CD14-positive monocyte (primary cell): ENCODE measurements at regions of chr17 and their contacts with region 1.

Region 1: DNA sequence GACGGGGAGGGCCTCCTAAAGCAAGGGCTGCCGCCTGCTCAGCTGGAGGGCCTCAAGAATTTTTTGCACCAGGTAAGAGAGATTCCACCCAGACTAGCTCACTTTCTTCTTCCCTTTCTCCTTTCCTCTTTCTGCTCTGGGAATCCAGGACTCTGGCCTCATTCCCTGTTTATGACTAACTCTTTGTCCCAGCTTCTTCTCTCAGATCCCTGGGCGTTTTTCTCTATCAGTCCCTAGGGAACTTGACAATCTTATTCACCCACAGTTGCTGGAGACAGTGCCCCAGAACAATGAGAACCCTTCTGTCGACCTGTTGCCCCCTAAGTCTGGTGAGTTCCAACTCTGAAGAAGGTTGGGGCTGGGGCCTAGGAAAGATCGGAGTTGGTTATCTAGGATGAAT is 15.6 kb downstream of the CNTROB start:
- DNase-seq: no peak
- H3K4me3 ChIP-seq: no peak overlapping the region
- H3K4me3 Mint-ChIP-seq: no peak overlapping the region
- H3K27ac ChIP-seq: peak overlapping the region in 1 of 2 donors; percentile 6
- H3K27ac Mint-ChIP-seq: peak overlapping the region in 2 of 7 donors; percentile 33 to 44
- H3K4me1 ChIP-seq: peaks cover 0 to 4% of the 10 kb centered on the region in 2 donors
- H3K4me1 Mint-ChIP-seq: peaks cover 15% of the 10 kb centered on the region
- H3K27me3 ChIP-seq: no peaks in the 10 kb centered on the region
- H3K27me3 Mint-ChIP-seq: peaks cover 0 to 1% (median 0%) of the 10 kb centered on the region in 3 donors
- CTCF ChIP-seq: no peak

Region 2: GRCh38 chr17:7982666-7983065 is 35.0 kb after region 1 on chr17:
- intact Hi-C with region 1: loop called in 1 of 2 experiments (anchors 5 kb)
- DNase-seq: no peak
- H3K4me3 ChIP-seq: no peak overlapping the region
- H3K4me3 Mint-ChIP-seq: no peak overlapping the region
- H3K27ac ChIP-seq: no peak overlapping the region
- H3K27ac Mint-ChIP-seq: peak overlapping the region in 1 of 7 donors; percentile 82
- H3K4me1 ChIP-seq: peaks cover 3 to 12% of the 10 kb centered on the region in 2 donors
- H3K4me1 Mint-ChIP-seq: peaks cover 12% of the 10 kb centered on the region
- H3K27me3 ChIP-seq: no peaks in the 10 kb centered on the region
- H3K27me3 Mint-ChIP-seq: peaks cover 0 to 2% (median 2%) of the 10 kb centered on the region in 3 donors
- CTCF ChIP-seq: no peak

Region 3: GRCh38 chr17:8105957-8106398 is 158.3 kb after region 1 on chr17:
- intact Hi-C with region 1: no loop called
- DNase-seq: no peak
- H3K4me3 ChIP-seq: no peak overlapping the region
- H3K4me3 Mint-ChIP-seq: no peak overlapping the region
- H3K27ac ChIP-seq: no peak overlapping the region
- H3K27ac Mint-ChIP-seq: peak overlapping the region in 1 of 7 donors; percentile 5
- H3K4me1 ChIP-seq: peaks cover 9 to 11% of the 10 kb centered on the region in 2 donors
- H3K4me1 Mint-ChIP-seq: peaks cover 9% of the 10 kb centered on the region
- H3K27me3 ChIP-seq: peaks cover 0 to 12% of the 10 kb centered on the region in 2 donors
- H3K27me3 Mint-ChIP-seq: peaks cover 9 to 33% (median 17%) of the 10 kb centered on the region in 3 donors
- CTCF ChIP-seq: no peak